ENCODE measurements at regions of chr13 and their contacts with region 1.

Region 1: GRCh38 chr13:112643759-112644459 is 45.9 kb upstream of the ATP11A start:
- DNase-seq: no peak
- ATAC-seq: no peak

Region 2: GRCh38 chr13:112587212-112587763 is 56.6 kb before region 1 on chr13:
- intact Hi-C with region 1: no loop called
- DNase-seq: peak; percentile 91
- ATAC-seq: peak; percentile 91

Region 3: GRCh38 chr13:112874751-112875300 is 230.9 kb after region 1 on chr13:
- intact Hi-C with region 1: loop called (anchors 5 kb)
- DNase-seq: no peak
- ATAC-seq: no peak